ENCODE measurements at regions of chr7 and their contacts with region 1.

Region 1: GRCh38 chr7:974820-975681 is at the start of gene COX19:
- DNase-seq: peak; percentile 82 to 92 (median 87)
- ATAC-seq: peak; percentile 98
- H3K4me3 ChIP-seq: peak within 1 kb of the TSS; percentile 95
- H3K4me3 Mint-ChIP-seq: peak within 1 kb of the TSS; percentile 86 to 96 (median 92)
- H3K27ac ChIP-seq: peak within 1 kb of the TSS; percentile 98
- H3K27ac Mint-ChIP-seq: peak within 1 kb of the TSS; percentile 59 to 94 (median 89)
- H3K4me1 ChIP-seq: peaks cover 14 to 20% of the 10 kb centered on the region in 2 donors
- H3K4me1 Mint-ChIP-seq: peaks cover 12 to 36% (median 25%) of the 10 kb centered on the region in 7 donors
- H3K27me3 ChIP-seq: no peaks in the 10 kb centered on the region
- H3K27me3 Mint-ChIP-seq: no peaks in the 10 kb centered on the region
- total RNA-seq, gene COX19: 18.3 to 48.2 (median 46.1) TPM

Region 2: GRCh38 chr7:816300-816750 is 158.7 kb before region 1 on chr7:
- CTCF ChIA-PET with region 1: no interaction called
- POLR2A ChIA-PET with region 1: no interaction called
- intact Hi-C with region 1: loop called in 1 of 2 experiments (anchors 2 kb)
- DNase-seq: peak; percentile 95 to 98 (median 97)
- ATAC-seq: peak; percentile 98
- H3K4me3 ChIP-seq: peak overlapping the region; percentile 52
- H3K4me3 Mint-ChIP-seq: peak overlapping the region; percentile 60 to 98 (median 88)
- H3K27ac ChIP-seq: peak overlapping the region; percentile 59
- H3K27ac Mint-ChIP-seq: peak overlapping the region in 3 of 9 donors; percentile 9 to 85 (median 65)
- H3K4me1 ChIP-seq: peaks cover 27 to 32% of the 10 kb centered on the region in 2 donors
- H3K4me1 Mint-ChIP-seq: peaks cover 45 to 72% (median 61%) of the 10 kb centered on the region in 7 donors
- H3K27me3 ChIP-seq: no peaks in the 10 kb centered on the region
- H3K27me3 Mint-ChIP-seq: peaks cover 0 to 42% (median 0%) of the 10 kb centered on the region in 5 donors

Region 3: DNA sequence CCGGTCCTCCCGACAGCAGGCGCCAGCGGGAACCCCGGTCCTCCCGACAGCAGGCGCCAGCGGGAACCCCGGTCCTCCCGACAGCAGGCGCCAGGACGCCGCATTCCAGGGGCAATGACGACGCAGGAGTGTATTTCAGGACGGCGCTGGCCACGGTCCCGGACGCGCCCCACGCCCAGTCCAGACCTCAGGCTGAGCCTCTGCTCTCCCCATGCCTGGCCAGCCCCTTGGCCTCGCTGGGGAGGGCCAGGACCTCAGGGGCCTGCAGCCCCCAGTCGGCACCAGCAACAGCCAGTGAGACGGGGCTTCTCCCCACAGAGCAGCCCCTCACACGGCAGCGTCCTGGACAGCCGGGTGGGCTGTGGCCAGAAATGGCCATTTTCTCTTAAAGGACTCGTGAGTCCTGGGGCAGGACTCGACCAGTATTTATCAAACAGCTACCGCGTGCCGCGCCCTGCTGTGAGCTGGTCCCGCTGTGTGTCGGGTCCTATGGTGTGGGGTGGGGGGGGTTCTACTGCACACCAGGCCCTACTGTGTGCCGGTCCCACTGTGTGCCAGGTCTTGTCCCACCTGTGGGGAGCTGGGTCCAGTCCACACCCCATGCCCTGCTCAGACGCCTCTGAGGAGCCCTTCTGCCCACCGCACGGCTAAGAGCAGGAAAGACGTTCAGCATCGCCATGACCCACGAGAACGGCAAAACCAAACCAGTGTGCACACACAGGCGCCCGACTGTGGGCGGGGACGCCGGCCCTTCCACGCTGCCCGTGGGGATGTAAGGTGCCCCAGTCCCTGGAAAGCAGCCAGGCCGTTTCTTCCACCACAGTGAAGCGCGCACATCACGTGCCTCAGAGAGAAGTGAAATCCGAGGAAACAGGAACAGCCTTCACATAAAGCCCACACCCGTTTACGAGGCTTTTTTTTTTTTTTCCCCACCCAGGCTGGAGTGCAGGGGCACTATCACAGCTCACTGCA is 65.4 kb before region 1 on chr7:
- CTCF ChIA-PET with region 1: interaction called, 6 read pairs
- POLR2A ChIA-PET with region 1: interaction called, 8 read pairs
- intact Hi-C with region 1: loop called in 1 of 2 experiments (anchors 1 kb)
- DNase-seq: peak in 3 of 9 donors; percentile 19 to 37 (median 29)
- ATAC-seq: peak; percentile 63
- H3K4me3 ChIP-seq: peak overlapping the region; percentile 9
- H3K4me3 Mint-ChIP-seq: peak overlapping the region in 9 of 10 donors; percentile 60 to 82 (median 77)
- H3K27ac ChIP-seq: no peak overlapping the region
- H3K27ac Mint-ChIP-seq: peak overlapping the region in 7 of 9 donors; percentile 28 to 80 (median 76)
- H3K4me1 ChIP-seq: peaks cover 0 to 11% of the 10 kb centered on the region in 2 donors
- H3K4me1 Mint-ChIP-seq: peaks cover 0 to 13% (median 10%) of the 10 kb centered on the region in 7 donors
- H3K27me3 ChIP-seq: no peaks in the 10 kb centered on the region
- H3K27me3 Mint-ChIP-seq: peaks cover 0 to 2% (median 0%) of the 10 kb centered on the region in 5 donors

Region 4: DNA sequence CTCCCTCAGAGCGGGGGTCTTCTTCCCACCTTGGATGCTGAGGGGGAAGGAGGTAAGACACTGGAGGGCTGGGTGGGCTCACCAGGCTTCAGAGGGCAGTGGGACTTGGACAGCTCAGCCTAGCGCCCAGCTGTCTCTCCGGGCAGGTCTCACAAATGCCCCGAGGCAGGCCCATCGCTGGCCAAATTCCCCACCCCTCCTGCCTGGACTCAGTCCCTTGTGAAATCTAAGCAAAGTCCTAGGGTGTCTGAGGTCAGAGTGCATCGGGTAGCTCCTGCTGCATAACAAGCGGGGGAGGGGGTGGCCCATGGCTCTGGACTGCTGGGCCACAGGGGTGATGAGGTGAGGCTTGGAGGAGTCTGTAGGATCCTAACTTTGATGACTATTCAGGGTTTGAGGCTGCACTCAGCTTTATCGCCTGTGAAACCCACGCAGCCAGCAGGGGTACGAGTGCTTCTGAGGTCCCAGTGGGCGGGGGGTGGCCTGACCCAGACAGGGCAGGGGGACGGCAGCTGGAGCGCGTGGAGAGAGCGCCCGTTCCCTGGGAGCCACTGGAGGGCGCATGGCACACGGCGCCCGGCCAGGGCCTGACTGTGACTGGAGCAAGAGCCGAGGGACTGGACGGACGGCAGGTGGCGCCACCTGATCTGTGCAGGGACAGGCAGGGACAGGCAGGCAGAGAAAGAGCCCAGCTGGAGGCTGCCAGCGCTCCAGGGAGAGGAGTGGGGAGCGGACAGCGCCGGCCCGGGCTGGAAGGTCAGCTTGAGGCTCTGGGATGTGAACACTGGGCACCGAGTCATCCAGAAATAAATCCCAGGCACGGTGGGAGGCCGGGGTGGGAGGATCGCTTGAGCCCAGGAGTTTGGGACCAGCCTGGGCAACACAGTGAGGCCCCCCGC is 17.9 kb after region 1 on chr7:
- CTCF ChIA-PET with region 1: interaction called, 11 read pairs
- POLR2A ChIA-PET with region 1: interaction called, 4 read pairs
- intact Hi-C with region 1: loop called in 1 of 2 experiments (anchors 1 kb)
- DNase-seq: peak; percentile 78 to 90 (median 89)
- ATAC-seq: peak; percentile 100
- H3K4me3 ChIP-seq: no peak overlapping the region
- H3K4me3 Mint-ChIP-seq: peak overlapping the region in 1 of 10 donors; percentile 16
- H3K27ac ChIP-seq: no peak overlapping the region
- H3K27ac Mint-ChIP-seq: peak overlapping the region in 2 of 9 donors; percentile 28 to 51
- H3K4me1 ChIP-seq: peaks cover 4 to 5% of the 10 kb centered on the region in 2 donors
- H3K4me1 Mint-ChIP-seq: peaks cover 0 to 6% (median 5%) of the 10 kb centered on the region in 7 donors
- H3K27me3 ChIP-seq: no peaks in the 10 kb centered on the region
- H3K27me3 Mint-ChIP-seq: no peaks in the 10 kb centered on the region

Region 5: DNA sequence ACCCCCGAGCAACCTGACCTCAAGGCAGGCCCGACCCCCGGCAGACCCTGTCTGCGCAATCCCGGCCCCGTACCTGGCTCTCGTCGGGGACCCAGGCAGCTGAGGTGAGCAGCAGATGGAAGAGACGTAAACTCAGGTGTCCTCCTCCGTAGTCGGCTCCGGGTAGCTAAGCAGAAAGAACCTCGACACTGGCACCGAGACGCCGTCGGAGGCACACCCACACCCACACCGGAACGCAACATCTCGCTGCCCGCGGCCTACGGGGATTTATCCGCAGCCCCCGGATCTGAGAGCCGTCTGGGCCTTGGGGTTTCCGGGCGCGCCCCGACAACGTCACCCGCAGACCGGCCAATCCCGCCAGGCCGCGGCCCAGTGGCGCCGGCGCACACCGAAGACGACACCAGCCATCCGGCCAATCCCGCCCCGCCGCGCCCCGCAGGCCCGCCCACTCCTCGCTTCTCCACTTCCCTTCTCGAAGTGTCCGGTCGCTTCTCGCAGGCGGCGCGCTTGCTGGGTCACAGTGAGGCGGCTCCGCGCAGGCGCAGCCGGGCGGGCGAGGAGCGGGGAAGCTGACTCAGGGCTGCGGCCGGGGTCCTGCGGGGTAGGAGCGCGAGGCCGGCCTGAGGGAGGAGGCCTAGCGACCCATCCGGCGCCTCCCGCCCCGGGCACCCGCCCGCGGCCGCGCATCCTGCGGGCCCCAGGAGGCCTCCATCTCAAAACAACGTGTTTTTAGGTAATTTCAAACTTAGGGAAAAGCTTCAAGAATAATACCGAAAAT is 185.0 kb after region 1 on chr7 and contains the start of gene ZFAND2A:
- CTCF ChIA-PET with region 1: no interaction called
- POLR2A ChIA-PET with region 1: interaction called, 4 read pairs
- intact Hi-C with region 1: loop called (anchors 1 to 2 kb)
- DNase-seq: peak; percentile 96 to 99 (median 98)
- ATAC-seq: peak; percentile 99
- H3K4me3 ChIP-seq: peak within 1 kb of the TSS; percentile 97
- H3K4me3 Mint-ChIP-seq: peak within 1 kb of the TSS; percentile 72 to 94 (median 88)
- H3K27ac ChIP-seq: peak within 1 kb of the TSS; percentile 96
- H3K27ac Mint-ChIP-seq: peak within 1 kb of the TSS; percentile 74 to 95 (median 90)
- H3K4me1 ChIP-seq: peaks cover 13 to 18% of the 10 kb centered on the region in 2 donors
- H3K4me1 Mint-ChIP-seq: peaks cover 9 to 35% (median 28%) of the 10 kb centered on the region in 7 donors
- H3K27me3 ChIP-seq: no peaks in the 10 kb centered on the region
- H3K27me3 Mint-ChIP-seq: no peaks in the 10 kb centered on the region
- total RNA-seq, gene ZFAND2A: 21.2 to 74.5 (median 38.6) TPM

Region 6: DNA sequence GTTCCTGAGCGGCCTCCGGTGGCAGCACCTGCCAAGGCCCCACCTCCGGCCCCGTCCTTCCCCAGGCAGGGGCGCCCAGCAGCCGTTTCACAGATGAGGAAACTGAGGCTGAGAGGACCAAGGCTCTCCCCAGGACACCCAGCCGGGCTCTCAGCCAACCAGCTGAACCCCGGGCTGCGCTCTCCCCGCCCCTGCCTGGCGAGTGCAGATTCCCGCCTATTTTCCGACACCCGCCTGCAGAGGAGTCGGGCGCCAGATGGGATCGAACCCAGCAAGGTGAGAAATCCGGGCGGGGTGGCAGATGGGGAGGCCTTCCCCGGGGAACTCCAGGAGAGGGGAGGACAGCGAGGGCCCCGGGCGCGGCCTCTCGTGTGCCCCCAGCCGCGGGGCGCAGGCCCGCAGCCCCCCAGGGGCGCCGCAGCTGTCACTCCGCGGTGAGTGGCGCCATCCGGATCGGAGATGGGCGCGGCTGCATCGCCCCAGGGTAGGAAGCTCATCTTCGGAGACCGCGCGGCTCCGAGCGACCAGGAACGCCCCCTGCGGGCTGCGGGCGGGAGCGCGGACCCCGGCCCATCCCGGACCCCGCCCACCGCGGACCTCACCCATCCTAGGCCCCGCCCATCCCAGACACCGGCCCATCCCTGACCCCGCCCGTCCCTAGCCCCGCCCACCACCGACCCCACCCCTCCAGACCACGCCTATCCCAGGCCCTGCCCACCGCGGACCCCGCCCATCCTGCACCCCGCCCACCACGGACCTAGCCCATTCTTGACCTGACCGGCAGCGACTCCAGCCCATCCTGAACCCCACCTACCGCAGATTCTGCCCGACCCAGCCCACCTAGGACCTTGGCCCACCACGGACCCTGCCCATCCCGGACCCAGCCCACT is 393.9 kb after region 1 on chr7:
- CTCF ChIA-PET with region 1: no interaction called
- POLR2A ChIA-PET with region 1: no interaction called
- intact Hi-C with region 1: no loop called
- DNase-seq: peak in 2 of 9 donors; percentile 3 to 42
- ATAC-seq: peak; percentile 45
- H3K4me3 ChIP-seq: no peak overlapping the region
- H3K4me3 Mint-ChIP-seq: peak overlapping the region in 5 of 10 donors; percentile 12 to 43 (median 14)
- H3K27ac ChIP-seq: no peak overlapping the region
- H3K27ac Mint-ChIP-seq: no peak overlapping the region
- H3K4me1 ChIP-seq: no peaks in the 10 kb centered on the region
- H3K4me1 Mint-ChIP-seq: peaks cover 0 to 5% (median 0%) of the 10 kb centered on the region in 7 donors
- H3K27me3 ChIP-seq: no peaks in the 10 kb centered on the region
- H3K27me3 Mint-ChIP-seq: peaks cover 33 to 68% (median 39%) of the 10 kb centered on the region in 5 donors

Region 7: DNA sequence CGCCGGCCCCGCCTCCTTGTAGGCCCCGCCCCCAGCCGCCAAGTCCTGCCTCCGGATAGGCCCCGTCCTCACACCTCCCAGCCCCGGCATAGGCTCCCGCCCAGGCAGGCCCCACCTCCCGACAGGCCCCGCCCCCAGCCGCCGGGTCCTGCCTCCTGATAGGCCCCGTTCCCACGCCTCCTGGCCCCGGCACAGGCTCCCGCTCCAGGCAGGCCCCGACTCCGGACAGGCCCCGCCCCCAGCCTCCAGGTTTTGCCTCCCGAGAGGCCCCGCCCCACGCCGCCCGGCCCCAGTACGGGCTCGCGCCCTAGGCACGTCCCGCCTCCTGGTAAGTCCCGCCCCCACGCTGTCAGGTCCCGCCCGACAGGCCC is 484.5 kb after region 1 on chr7:
- CTCF ChIA-PET with region 1: no interaction called
- POLR2A ChIA-PET with region 1: no interaction called
- intact Hi-C with region 1: loop called in 1 of 2 experiments (anchors 1 kb)
- DNase-seq: peak; percentile 98 to 99 (median 99)
- ATAC-seq: peak; percentile 97
- H3K4me3 ChIP-seq: peak overlapping the region; percentile 73
- H3K4me3 Mint-ChIP-seq: peak overlapping the region in 8 of 10 donors; percentile 58 to 75 (median 70)
- H3K27ac ChIP-seq: peak overlapping the region; percentile 55
- H3K27ac Mint-ChIP-seq: peak overlapping the region in 1 of 9 donors; percentile 76
- H3K4me1 ChIP-seq: peaks cover 8 to 14% of the 10 kb centered on the region in 2 donors
- H3K4me1 Mint-ChIP-seq: peaks cover 7 to 25% (median 18%) of the 10 kb centered on the region in 7 donors
- H3K27me3 ChIP-seq: no peaks in the 10 kb centered on the region
- H3K27me3 Mint-ChIP-seq: peaks cover 0 to 5% (median 0%) of the 10 kb centered on the region in 5 donors